Psoas muscle (tissue), 8 donors: ENCODE measurements at regions of chr11 and their contacts with region 1.

Region 1: DNA sequence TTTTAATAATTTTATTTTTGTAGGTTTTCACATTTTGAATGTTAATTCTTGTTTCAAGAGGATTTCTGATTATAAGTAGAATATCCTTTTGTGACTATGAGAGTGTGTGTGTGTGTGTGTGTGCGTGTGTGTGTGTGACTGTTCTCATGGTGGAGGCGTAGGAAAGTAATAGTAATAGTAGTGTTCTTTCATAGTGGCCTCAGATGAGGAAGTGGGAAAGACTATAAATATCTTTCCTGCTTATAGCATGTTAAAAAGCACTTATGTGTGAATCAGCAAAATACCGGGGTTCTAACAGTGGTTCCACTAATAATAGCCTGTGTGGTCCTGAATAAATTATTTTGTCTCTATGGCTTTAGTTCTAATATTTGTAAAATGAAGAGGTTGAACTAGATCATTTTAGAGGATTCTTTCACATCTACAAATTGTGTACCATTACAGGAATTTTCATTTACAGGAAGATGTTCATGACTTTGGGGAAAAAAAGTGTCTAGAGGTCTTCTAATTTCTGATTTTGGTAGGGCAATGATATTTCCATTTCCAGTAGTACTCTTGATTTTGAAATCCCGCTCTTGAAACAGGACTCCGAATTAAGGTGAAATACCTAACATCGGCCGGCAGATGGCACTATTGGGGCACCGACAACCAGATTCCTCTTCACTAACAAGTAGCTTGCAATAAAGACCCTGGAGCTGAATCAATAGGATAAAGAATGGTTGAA is 29.9 kb upstream of the OR10G7 start:
- DNase-seq: peak; percentile 50 to 73
- ATAC-seq: peak in 2 of 4 donors; percentile 40 to 61
- H3K4me3 ChIP-seq: no peak overlapping the region
- H3K27ac ChIP-seq: no peak overlapping the region
- H3K4me1 ChIP-seq: no peaks in the 10 kb centered on the region
- H3K27me3 ChIP-seq: peaks cover 0 to 32% (median 0%) of the 10 kb centered on the region in 3 donors
- CTCF ChIP-seq: peak; percentile 74

Region 2: DNA sequence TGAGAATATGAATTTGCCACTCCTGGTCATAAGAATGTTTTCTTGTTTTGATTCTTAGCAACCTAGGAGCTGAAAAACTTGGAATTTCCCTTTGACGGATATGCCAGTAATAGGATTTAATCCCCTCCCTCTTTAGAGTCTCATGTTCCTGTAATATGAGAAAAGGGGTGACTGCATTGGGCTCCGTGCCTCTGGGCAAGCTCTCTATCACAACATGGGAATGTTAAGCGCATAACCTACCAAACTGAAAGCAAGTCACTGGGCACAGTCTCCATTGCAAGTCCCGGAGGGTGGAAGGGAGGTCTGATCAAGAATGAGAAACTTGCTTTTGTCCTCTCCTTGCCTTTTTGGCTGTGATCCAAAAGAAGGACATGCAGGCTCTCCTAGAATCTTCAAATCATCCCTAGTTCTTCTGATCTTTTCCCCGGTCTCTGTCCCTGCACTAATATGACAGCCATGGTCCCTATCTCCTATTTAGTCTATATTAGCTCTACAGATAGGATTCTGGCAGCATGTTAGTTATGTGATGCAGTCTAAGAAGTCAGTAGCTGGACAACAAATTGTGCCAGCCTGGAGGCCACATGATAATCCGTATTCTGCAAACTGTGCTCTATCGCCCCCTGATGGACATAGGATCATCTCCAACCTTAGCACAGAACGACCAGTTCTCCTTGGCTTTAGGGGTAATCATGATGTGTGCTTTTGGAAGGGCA is 123.8 kb after region 1 on chr11:
- intact Hi-C with region 1: loop called in 1 of 2 experiments (anchors 5 kb)
- DNase-seq: no peak
- ATAC-seq: peak in 2 of 4 donors; percentile 40 to 46
- H3K4me3 ChIP-seq: no peak overlapping the region
- H3K27ac ChIP-seq: no peak overlapping the region
- H3K4me1 ChIP-seq: no peaks in the 10 kb centered on the region
- H3K27me3 ChIP-seq: no peaks in the 10 kb centered on the region
- CTCF ChIP-seq: peak; percentile 42